Activated T-helper 2 cell treated with anti-CD3 and anti-CD28 coated beads, Interferon-gamma antibody, Interleukin-2, Interleukin-4, amounts not matched to agents 10 μg/mL and 5 μg/mL and 100 μg/mL, durations not matched to agents 14 hours and 24 hours and 36 hours (primary cell): ENCODE measurements at regions of chr2 and their contacts with region 1.

Region 1: GRCh38 chr2:28649481-28650214 is 102.0 kb upstream of the PPP1CB start:
- DNase-seq: no peak
- H3K4me3 Mint-ChIP-seq: no peak overlapping the region
- H3K27ac Mint-ChIP-seq: peak overlapping the region; percentile 70
- H3K4me1 Mint-ChIP-seq: peaks cover 37% of the 10 kb centered on the region
- H3K27me3 Mint-ChIP-seq: no peaks in the 10 kb centered on the region

Region 2: DNA sequence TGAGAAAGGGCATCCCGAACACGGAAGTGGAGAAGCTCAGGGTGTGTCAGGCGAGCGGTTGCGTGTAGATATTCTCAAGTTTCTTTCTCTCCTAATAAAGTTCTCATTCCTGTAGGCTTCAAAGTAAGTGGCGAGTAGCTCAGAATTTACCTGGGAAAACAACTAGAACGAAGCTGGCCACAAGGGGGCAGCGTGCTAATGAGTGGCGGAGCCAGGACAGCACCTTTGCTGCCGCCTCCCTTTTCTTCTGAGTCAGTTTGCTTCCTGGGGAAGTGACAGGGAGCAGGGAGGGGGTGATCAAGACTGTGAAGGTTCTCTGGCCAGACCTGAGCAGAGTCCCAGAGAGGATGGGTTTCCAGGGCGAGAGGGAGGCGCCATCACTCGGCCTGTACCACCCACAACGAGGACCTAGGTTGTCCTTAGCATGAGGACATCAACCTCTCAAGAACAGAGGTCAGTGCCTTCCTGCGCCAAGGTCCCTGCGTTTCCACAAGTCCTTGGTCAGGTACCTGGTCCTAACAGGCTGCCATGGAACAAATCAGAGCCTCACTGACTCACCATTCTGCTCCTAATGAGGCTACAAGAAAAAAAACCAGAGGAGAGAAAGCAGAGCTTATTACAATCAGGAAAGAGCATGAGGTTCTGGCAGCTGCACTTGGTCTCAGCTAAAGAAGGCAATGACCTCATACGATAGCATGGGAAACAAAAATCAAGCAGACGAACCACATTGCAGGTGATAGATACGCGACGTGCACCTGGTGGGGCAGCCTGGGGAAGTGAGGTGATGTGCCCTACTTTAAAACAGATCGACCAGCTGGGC is 55.1 kb before region 1 on chr2:
- intact Hi-C with region 1: loop called (anchors 1 kb)
- DNase-seq: peak; percentile 73
- H3K4me3 Mint-ChIP-seq: peak overlapping the region; percentile 11
- H3K27ac Mint-ChIP-seq: peak overlapping the region; percentile 79
- H3K4me1 Mint-ChIP-seq: peaks cover 18% of the 10 kb centered on the region
- H3K27me3 Mint-ChIP-seq: no peaks in the 10 kb centered on the region

Region 3: GRCh38 chr2:28610583-28611201 is 39.0 kb before region 1 on chr2:
- intact Hi-C with region 1: loop called (anchors 2 kb)
- DNase-seq: no peak
- H3K4me3 Mint-ChIP-seq: no peak overlapping the region
- H3K27ac Mint-ChIP-seq: peak overlapping the region; percentile 10
- H3K4me1 Mint-ChIP-seq: peaks cover 21% of the 10 kb centered on the region
- H3K27me3 Mint-ChIP-seq: no peaks in the 10 kb centered on the region

Region 4: GRCh38 chr2:28681158-28681571 is 31.5 kb after region 1 on chr2:
- intact Hi-C with region 1: loop called (anchors 1 kb)
- DNase-seq: peak; percentile 45
- H3K4me3 Mint-ChIP-seq: peak overlapping the region; percentile 39
- H3K27ac Mint-ChIP-seq: peak overlapping the region; percentile 95
- H3K4me1 Mint-ChIP-seq: peaks cover 61% of the 10 kb centered on the region
- H3K27me3 Mint-ChIP-seq: no peaks in the 10 kb centered on the region